CD8-positive, alpha-beta T cell (primary cell): ENCODE measurements at regions of chr1 and their contacts with region 1.

Region 1: GRCh38 chr1:155277070-155277895 is at the start of gene HCN3:
- DNase-seq: peak; percentile 65 to 96 (median 92)
- ATAC-seq: peak; percentile 47
- H3K4me3 ChIP-seq: peak within 1 kb of the TSS; percentile 57 to 70
- H3K4me3 Mint-ChIP-seq: peak within 1 kb of the TSS; percentile 79
- H3K27ac ChIP-seq: peak within 1 kb of the TSS; percentile 20 to 31
- H3K27ac Mint-ChIP-seq: peak within 1 kb of the TSS; percentile 32
- H3K4me1 ChIP-seq: peaks cover 29% of the 10 kb centered on the region
- H3K4me1 Mint-ChIP-seq: peaks cover 35% of the 10 kb centered on the region
- H3K27me3 ChIP-seq: no peaks in the 10 kb centered on the region
- H3K27me3 Mint-ChIP-seq: no peaks in the 10 kb centered on the region
- CTCF ChIP-seq: peak; percentile 64
- total RNA-seq, gene HCN3: 1.3 TPM

Region 2: GRCh38 chr1:154607609-154608396 is 669.5 kb before region 1 on chr1 and contains the start of gene ADAR:
- CTCF ChIA-PET with region 1: no interaction called
- POLR2A ChIA-PET with region 1: interaction called, 7 read pairs
- intact Hi-C with region 1: loop called in 1 of 2 experiments (anchors 10 kb)
- DNase-seq: peak; percentile 72 to 98 (median 87)
- ATAC-seq: peak; percentile 85
- H3K4me3 ChIP-seq: peak within 1 kb of the TSS; percentile 89 to 90
- H3K4me3 Mint-ChIP-seq: peak within 1 kb of the TSS; percentile 98
- H3K27ac ChIP-seq: peak within 1 kb of the TSS; percentile 92 to 96
- H3K27ac Mint-ChIP-seq: peak within 1 kb of the TSS; percentile 98
- H3K4me1 ChIP-seq: peaks cover 59% of the 10 kb centered on the region
- H3K4me1 Mint-ChIP-seq: peaks cover 73% of the 10 kb centered on the region
- H3K27me3 ChIP-seq: no peaks in the 10 kb centered on the region
- H3K27me3 Mint-ChIP-seq: no peaks in the 10 kb centered on the region
- CTCF ChIP-seq: no peak
- total RNA-seq, gene ADAR: 221 to 238 TPM

Region 3: GRCh38 chr1:155227261-155228095 is 49.8 kb before region 1 on chr1:
- CTCF ChIA-PET with region 1: no interaction called
- POLR2A ChIA-PET with region 1: no interaction called
- intact Hi-C with region 1: loop called in 1 of 2 experiments (anchors 1 kb)
- DNase-seq: peak; percentile 95 to 100 (median 98)
- ATAC-seq: peak; percentile 95
- H3K4me3 ChIP-seq: peak overlapping the region; percentile 71 to 74
- H3K4me3 Mint-ChIP-seq: peak overlapping the region; percentile 88
- H3K27ac ChIP-seq: peak overlapping the region; percentile 70 to 86
- H3K27ac Mint-ChIP-seq: peak overlapping the region; percentile 85
- H3K4me1 ChIP-seq: peaks cover 18% of the 10 kb centered on the region
- H3K4me1 Mint-ChIP-seq: peaks cover 24% of the 10 kb centered on the region
- H3K27me3 ChIP-seq: no peaks in the 10 kb centered on the region
- H3K27me3 Mint-ChIP-seq: no peaks in the 10 kb centered on the region
- CTCF ChIP-seq: no peak

Region 4: GRCh38 chr1:155261852-155262673 is 15.2 kb before region 1 on chr1 and contains the start of gene SCAMP3:
- CTCF ChIA-PET with region 1: interaction called, 4 read pairs
- POLR2A ChIA-PET with region 1: interaction called, 27 read pairs
- intact Hi-C with region 1: loop called (anchors 1 kb)
- DNase-seq: peak; percentile 61 to 96 (median 84)
- ATAC-seq: peak; percentile 95
- H3K4me3 ChIP-seq: peak within 1 kb of the TSS; percentile 79 to 86
- H3K4me3 Mint-ChIP-seq: peak within 1 kb of the TSS; percentile 100
- H3K27ac ChIP-seq: peak within 1 kb of the TSS; percentile 72 to 85
- H3K27ac Mint-ChIP-seq: peak within 1 kb of the TSS; percentile 97
- H3K4me1 ChIP-seq: peaks cover 16% of the 10 kb centered on the region
- H3K4me1 Mint-ChIP-seq: peaks cover 29% of the 10 kb centered on the region
- H3K27me3 ChIP-seq: no peaks in the 10 kb centered on the region
- H3K27me3 Mint-ChIP-seq: no peaks in the 10 kb centered on the region
- CTCF ChIP-seq: no peak
- total RNA-seq, gene SCAMP3: 47.5 to 48.5 TPM

Region 5: GRCh38 chr1:155308493-155309422 is 31.5 kb after region 1 on chr1 and contains the start of gene FDPS:
- CTCF ChIA-PET with region 1: interaction called, 4 read pairs
- POLR2A ChIA-PET with region 1: interaction called, 3 read pairs
- intact Hi-C with region 1: loop called (anchors 1 kb)
- DNase-seq: peak; percentile 92 to 100 (median 96)
- ATAC-seq: peak; percentile 97
- H3K4me3 ChIP-seq: peak within 1 kb of the TSS; percentile 73 to 97
- H3K4me3 Mint-ChIP-seq: peak within 1 kb of the TSS; percentile 94
- H3K27ac ChIP-seq: peak within 1 kb of the TSS; percentile 70 to 91
- H3K27ac Mint-ChIP-seq: peak within 1 kb of the TSS; percentile 93
- H3K4me1 ChIP-seq: peaks cover 18% of the 10 kb centered on the region
- H3K4me1 Mint-ChIP-seq: peaks cover 27% of the 10 kb centered on the region
- H3K27me3 ChIP-seq: no peaks in the 10 kb centered on the region
- H3K27me3 Mint-ChIP-seq: no peaks in the 10 kb centered on the region
- CTCF ChIP-seq: no peak
- total RNA-seq, gene FDPS: 38.2 to 38.7 TPM

Region 6: GRCh38 chr1:155323798-155324610 is 46.7 kb after region 1 on chr1:
- CTCF ChIA-PET with region 1: interaction called, 17 read pairs
- POLR2A ChIA-PET with region 1: interaction called, 13 read pairs
- intact Hi-C with region 1: loop called (anchors 1 kb)
- DNase-seq: peak; percentile 66 to 94 (median 85)
- ATAC-seq: peak; percentile 81
- H3K4me3 ChIP-seq: peak overlapping the region; percentile 89 to 100
- H3K4me3 Mint-ChIP-seq: peak overlapping the region; percentile 90
- H3K27ac ChIP-seq: peak overlapping the region; percentile 69 to 90
- H3K27ac Mint-ChIP-seq: peak overlapping the region; percentile 55
- H3K4me1 ChIP-seq: peaks cover 34% of the 10 kb centered on the region
- H3K4me1 Mint-ChIP-seq: peaks cover 33% of the 10 kb centered on the region
- H3K27me3 ChIP-seq: no peaks in the 10 kb centered on the region
- H3K27me3 Mint-ChIP-seq: no peaks in the 10 kb centered on the region
- CTCF ChIP-seq: no peak

Region 7: DNA sequence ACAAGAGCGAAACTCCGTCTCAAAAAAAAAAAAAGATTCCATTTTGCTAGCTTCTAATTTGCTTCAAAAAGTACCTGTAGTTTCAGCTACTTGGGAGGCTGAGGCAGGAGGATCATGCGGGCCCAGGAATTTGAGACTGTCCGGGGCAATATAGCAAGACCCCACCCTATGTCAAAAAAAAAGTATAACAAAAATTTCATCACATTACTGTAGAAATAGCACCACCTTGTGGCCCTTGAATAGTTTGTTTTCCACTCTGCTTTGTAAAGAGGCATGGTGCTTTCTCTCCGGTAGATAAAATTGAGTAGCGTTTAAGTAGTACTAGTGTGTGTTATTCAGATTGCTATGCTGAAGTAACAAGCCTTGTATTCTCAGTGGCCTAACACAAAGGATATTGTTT is 314.5 kb after region 1 on chr1:
- CTCF ChIA-PET with region 1: no interaction called
- POLR2A ChIA-PET with region 1: no interaction called
- intact Hi-C with region 1: loop called in 1 of 2 experiments (anchors 1 kb)
- DNase-seq: peak in 5 of 9 experiments; percentile 11 to 78 (median 31)
- ATAC-seq: peak; percentile 77
- H3K4me3 ChIP-seq: no peak overlapping the region
- H3K4me3 Mint-ChIP-seq: no peak overlapping the region
- H3K27ac ChIP-seq: no peak overlapping the region
- H3K27ac Mint-ChIP-seq: no peak overlapping the region
- H3K4me1 ChIP-seq: no peaks in the 10 kb centered on the region
- H3K4me1 Mint-ChIP-seq: peaks cover 3% of the 10 kb centered on the region
- H3K27me3 ChIP-seq: no peaks in the 10 kb centered on the region
- H3K27me3 Mint-ChIP-seq: no peaks in the 10 kb centered on the region
- CTCF ChIP-seq: peak; percentile 64